ENCODE measurements at regions of chr18 and their contacts with region 1.

Region 1: GRCh38 chr18:67515945-67516538 is 478 bp downstream of the DSEL start:
- DNase-seq: peak; percentile 85 to 94 (median 88)
- H3K4me3 ChIP-seq: peak overlapping the region; percentile 66 to 99 (median 91)
- H3K27ac ChIP-seq: peak overlapping the region; percentile 85 to 99 (median 96)
- H3K27me3 ChIP-seq: no peaks in the 10 kb centered on the region
- CTCF ChIP-seq: peak in 55 of 56 donors; percentile 47 to 89 (median 74)

Region 2: DNA sequence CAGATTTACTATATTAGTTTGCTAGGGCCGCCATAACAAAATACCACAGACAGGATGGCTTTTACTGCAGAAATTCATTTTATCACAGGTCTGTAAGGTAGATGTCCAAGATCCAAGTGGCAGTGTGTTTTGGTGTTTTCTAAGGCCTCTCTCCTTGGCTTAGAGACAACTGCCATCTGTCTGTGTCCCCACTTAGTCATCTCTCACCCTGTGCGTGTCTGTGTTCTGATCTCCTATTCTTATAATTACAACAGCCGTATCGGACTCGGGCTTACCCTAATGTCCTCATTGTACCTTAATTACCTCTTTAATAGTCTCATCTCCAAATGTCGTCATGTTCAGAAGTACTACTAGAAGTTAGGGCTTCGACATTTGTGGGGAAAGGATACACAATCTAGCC is 549.9 kb before region 1 on chr18:
- intact Hi-C with region 1: no loop called
- DNase-seq: no peak
- H3K4me3 ChIP-seq: no peak overlapping the region
- H3K27ac ChIP-seq: no peak overlapping the region
- H3K27me3 ChIP-seq: no peaks in the 10 kb centered on the region
- CTCF ChIP-seq: no peak

Region 3: DNA sequence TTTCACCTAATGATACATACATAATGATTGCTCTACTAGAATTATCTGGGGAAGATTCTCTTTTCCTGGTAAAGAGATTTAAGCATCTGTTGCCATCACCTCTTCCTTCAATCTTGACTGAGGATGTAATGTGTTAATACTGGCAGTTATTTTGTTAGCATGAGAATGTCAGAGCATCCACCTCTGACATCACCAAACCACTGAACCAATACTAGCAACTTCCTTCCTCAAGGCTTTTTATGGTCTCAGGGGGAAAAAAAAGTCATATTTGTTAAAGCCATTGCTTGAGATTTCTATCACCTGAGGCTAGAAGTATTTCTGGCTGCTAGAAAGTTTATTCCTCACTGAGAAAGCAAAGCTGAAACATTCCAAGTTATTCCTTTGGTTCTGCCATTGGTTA is 48.0 kb before region 1 on chr18:
- intact Hi-C with region 1: loop called in 1 of 2 experiments (anchors 5 kb)
- DNase-seq: no peak
- H3K4me3 ChIP-seq: no peak overlapping the region
- H3K27ac ChIP-seq: no peak overlapping the region
- H3K27me3 ChIP-seq: peaks cover 0 to 7% (median 0%) of the 10 kb centered on the region in 45 donors
- CTCF ChIP-seq: no peak

Region 4: DNA sequence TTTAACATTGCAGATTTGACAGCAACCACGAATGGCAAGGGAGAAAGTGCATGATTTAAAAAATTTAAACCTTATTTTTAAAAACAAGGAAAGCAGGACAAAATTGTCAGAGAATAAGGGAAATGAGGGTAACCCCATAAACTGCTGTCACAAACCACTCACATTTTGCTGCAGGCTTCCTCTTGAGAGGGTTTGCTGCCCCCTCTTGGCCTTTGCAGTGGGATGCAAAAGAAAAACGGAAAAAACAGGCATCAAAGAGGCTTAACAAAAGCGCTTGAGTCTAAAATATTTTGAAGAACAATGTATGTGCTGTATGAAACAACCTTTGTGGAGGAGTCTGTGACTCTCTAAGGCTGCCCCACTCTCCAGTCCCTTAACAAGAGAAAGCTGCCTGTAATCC is 1107.3 kb after region 1 on chr18:
- intact Hi-C with region 1: loop called in 1 of 2 experiments (anchors 5 kb)
- DNase-seq: peak in 8 of 10 donors; percentile 35 to 69 (median 62)
- H3K4me3 ChIP-seq: no peak overlapping the region
- H3K27ac ChIP-seq: no peak overlapping the region
- H3K27me3 ChIP-seq: no peaks in the 10 kb centered on the region
- CTCF ChIP-seq: peak; percentile 55 to 85 (median 76)